ENCODE measurements at regions of chr11 and their contacts with region 1.

Region 1: DNA sequence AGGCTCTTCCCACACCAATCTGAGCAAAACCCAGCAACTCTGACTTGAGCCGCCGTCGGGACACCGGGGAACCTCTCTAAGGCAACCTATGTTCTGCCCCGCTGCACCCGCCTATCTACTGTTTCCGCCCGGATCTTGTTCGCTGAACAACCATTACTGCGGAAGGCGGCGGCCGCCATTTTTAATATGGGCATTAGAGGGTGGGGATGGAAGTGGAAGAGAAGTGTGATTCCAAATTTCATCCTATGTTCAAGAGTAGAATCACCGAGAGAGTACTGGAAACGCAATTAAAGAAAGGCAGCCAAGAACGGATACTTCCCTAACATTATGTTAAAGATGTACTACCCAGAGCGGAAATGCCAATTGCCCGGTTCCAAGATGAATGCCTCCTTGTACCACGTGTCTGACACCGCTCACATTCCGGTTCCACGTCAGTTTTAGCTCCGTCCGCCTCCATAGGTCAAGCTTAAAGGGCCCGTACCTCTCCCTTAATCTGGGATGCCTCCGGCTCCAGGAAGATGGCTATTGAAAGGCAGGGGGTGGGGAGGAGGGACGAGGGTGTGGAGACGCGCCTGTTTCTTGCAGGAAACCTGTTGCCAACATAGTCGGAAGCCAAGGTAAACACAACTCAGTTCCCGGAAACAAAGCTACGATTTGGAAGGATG is at the start of gene DPAGT1:
- DNase-seq: peak; percentile 99
- total RNA-seq, gene DPAGT1: 4.0 and 4.7 TPM in 2 replicates

Region 2: GRCh38 chr11:119018074-119018938 is 83.6 kb before region 1 on chr11 and contains the starts of genes RPS25 and TRAPPC4:
- in situ Hi-C with region 1: loop called (anchors 10 kb)
- DNase-seq: peak; percentile 98
- total RNA-seq, gene RPS25: 2,429 and 3,013 TPM in 2 replicates
- total RNA-seq, gene TRAPPC4: 97.7 and 110 TPM in 2 replicates